ENCODE measurements at regions of chr1 and their contacts with region 1.

Region 1: DNA sequence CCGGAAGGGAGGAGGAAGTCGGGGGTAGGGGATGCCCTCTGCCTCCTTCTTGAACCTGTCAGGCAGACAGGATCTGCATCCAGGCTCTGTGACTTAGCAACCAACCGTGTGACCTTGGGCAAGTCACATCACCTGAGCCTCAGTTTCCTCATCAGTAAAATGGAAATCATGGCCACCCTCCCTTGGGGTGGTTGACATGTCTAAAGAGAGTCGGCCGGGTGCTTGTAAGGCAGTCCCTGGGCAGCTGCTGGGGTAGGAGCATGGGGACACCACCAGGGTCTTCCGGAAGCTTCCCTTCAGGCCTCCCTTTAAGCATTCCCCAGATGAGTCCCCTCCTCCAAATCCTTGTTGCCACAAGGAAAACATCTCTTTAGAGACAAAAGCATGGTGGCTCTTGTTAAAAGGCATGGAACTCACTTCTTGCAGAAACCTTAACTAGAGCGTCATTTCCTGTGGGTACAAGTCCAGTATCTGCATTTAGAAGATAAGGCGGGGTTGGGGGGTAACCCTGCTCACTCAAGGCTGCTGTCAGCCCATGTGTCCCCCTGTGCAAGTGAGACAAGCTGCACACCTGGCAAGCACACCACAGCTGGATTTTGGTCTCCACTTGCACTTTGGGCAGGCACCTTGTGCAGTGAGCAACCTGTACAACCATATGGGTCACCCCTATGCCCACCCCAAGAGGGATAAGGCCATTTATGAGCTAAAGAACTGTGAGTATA is 10.4 kb downstream of the CLCNKB start:
- DNase-seq: no peak
- ATAC-seq: no peak
- H3K4me3 ChIP-seq: no peak overlapping the region
- H3K27ac ChIP-seq: no peak overlapping the region
- H3K4me1 ChIP-seq: peaks cover 9% of the 10 kb centered on the region
- H3K27me3 ChIP-seq: no peaks in the 10 kb centered on the region
- CTCF ChIP-seq: no peak
- POLR2A ChIP-seq: no peak

Region 2: DNA sequence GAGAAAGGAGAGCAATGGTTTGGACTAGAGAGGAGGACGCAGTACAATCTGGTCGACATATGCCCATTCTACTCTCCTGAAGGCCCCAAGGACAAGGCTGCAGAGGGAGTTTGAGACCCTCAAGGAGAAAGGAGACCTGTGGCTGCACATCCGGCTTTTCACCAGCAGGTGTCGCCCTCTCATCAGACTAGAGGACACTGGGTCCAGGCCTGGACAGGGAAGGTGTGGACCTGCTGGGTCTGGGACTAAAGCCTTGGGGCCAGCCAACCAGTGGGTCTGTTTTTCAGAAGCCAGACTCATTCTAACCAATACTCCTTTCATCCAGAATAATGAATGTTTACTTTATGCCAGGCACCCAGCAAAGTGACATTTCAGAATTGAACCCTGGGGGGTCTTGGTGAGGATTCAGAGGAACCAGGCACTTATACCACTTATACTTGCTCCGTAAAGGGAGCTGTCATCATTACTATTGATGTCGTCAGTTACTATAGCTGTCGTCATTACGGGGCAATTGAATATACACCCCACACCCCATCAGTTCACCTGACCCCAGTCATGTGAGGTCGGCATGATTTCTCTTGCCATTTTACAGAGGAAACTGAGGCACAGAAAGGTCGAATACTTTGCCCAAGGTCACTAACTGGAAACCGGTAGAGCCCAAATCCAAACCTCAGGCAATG is 44.8 kb before region 1 on chr1:
- intact Hi-C with region 1: loop called (anchors 5 kb)
- DNase-seq: peak; percentile 82 to 89 (median 86)
- ATAC-seq: peak; percentile 49
- H3K4me3 ChIP-seq: no peak overlapping the region
- H3K27ac ChIP-seq: no peak overlapping the region
- H3K4me1 ChIP-seq: peaks cover 21% of the 10 kb centered on the region
- H3K27me3 ChIP-seq: no peaks in the 10 kb centered on the region
- CTCF ChIP-seq: peak; percentile 70 to 95 (median 93)
- POLR2A ChIP-seq: no peak

Measured in body of pancreas (tissue), 4 donors.